SK-N-SH (cell line): ENCODE measurements at regions of chr12 and their contacts with region 1.

Region 1: GRCh38 chr12:126734710-126735109 is 1532.3 kb upstream of the TMEM132C start:
- DNase-seq: no peak
- H3K4me3 ChIP-seq: no peak overlapping the region
- H3K27ac ChIP-seq: no peak overlapping the region
- H3K4me1 ChIP-seq: no peaks in the 10 kb centered on the region
- H3K27me3 ChIP-seq: no peaks in the 10 kb centered on the region
- CTCF ChIP-seq: no peak
- EP300 ChIP-seq: no peak
- RAD21 ChIP-seq: no peak

Region 2: GRCh38 chr12:126651133-126651532 is 83.6 kb before region 1 on chr12:
- CTCF ChIA-PET with region 1: no interaction called
- POLR2A ChIA-PET with region 1: no interaction called
- DNase-seq: no peak
- H3K4me3 ChIP-seq: no peak overlapping the region
- H3K27ac ChIP-seq: no peak overlapping the region
- H3K4me1 ChIP-seq: no peaks in the 10 kb centered on the region
- H3K27me3 ChIP-seq: no peaks in the 10 kb centered on the region
- CTCF ChIP-seq: no peak
- EP300 ChIP-seq: no peak
- RAD21 ChIP-seq: no peak

Region 3: DNA sequence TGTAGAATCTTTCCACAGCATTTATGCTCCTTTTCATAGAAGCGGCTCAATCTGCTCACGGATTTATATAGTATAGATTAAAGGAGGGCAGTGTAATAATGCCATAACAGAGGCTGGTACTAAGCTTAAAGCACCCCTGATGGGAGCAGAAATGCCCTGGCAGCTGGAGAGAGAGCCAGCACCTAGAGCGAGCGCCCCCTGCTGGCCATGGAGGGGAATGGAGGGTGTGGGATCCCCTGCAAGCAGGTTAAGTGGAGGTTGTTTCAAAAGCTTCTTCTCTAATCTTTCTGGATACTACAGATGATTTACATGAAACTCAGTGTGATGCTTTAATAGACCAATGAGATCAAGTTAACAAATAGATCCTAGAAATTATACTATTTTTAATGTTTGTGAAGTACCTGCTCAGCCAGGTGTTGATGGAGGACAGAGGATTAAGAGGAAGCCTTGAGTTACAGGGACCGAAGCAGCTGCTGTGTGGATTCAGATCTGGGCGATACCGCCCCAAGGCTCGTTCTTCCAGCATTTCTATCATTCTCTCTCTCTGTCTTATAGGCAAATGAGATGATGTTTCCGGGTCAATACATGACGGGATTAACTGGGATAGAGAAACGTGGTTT is 12.9 kb after region 1 on chr12:
- CTCF ChIA-PET with region 1: interaction called, 12 read pairs
- POLR2A ChIA-PET with region 1: no interaction called
- DNase-seq: peak; percentile 69
- H3K4me3 ChIP-seq: no peak overlapping the region
- H3K27ac ChIP-seq: no peak overlapping the region
- H3K4me1 ChIP-seq: no peaks in the 10 kb centered on the region
- H3K27me3 ChIP-seq: no peaks in the 10 kb centered on the region
- CTCF ChIP-seq: peak; percentile 83
- EP300 ChIP-seq: no peak
- RAD21 ChIP-seq: peak; percentile 61

Region 4: GRCh38 chr12:126989532-126989931 is 254.8 kb after region 1 on chr12:
- CTCF ChIA-PET with region 1: no interaction called
- POLR2A ChIA-PET with region 1: no interaction called
- DNase-seq: no peak
- H3K4me3 ChIP-seq: no peak overlapping the region
- H3K27ac ChIP-seq: no peak overlapping the region
- H3K4me1 ChIP-seq: no peaks in the 10 kb centered on the region
- H3K27me3 ChIP-seq: no peaks in the 10 kb centered on the region
- CTCF ChIP-seq: no peak
- EP300 ChIP-seq: no peak
- RAD21 ChIP-seq: no peak